ENCODE measurements at regions of chr2 and their contacts with region 1.

Region 1: GRCh38 chr2:85635636-85636035 is 19.6 kb downstream of the USP39 start:
- DNase-seq: no peak
- H3K4me3 ChIP-seq: no peak overlapping the region
- H3K4me3 Mint-ChIP-seq: no peak overlapping the region
- H3K27ac ChIP-seq: peak overlapping the region in 1 of 2 donors; percentile 65
- H3K27ac Mint-ChIP-seq: peak overlapping the region in 3 of 7 donors; percentile 1 to 38 (median 20)
- H3K4me1 ChIP-seq: no peaks in the 10 kb centered on the region
- H3K4me1 Mint-ChIP-seq: peaks cover 7% of the 10 kb centered on the region
- H3K27me3 ChIP-seq: no peaks in the 10 kb centered on the region
- H3K27me3 Mint-ChIP-seq: no peaks in the 10 kb centered on the region
- CTCF ChIP-seq: no peak

Region 2: GRCh38 chr2:85707304-85707703 is 71.7 kb after region 1 on chr2:
- intact Hi-C with region 1: no loop called
- DNase-seq: peak; percentile 88 to 96 (median 88)
- H3K4me3 ChIP-seq: peak overlapping the region in 1 of 3 experiments; percentile 35
- H3K4me3 Mint-ChIP-seq: peak overlapping the region in 1 of 2 donors; percentile 52
- H3K27ac ChIP-seq: peak overlapping the region; percentile 97 to 99
- H3K27ac Mint-ChIP-seq: peak overlapping the region; percentile 97 to 100 (median 99)
- H3K4me1 ChIP-seq: peaks cover 100% of the 10 kb centered on the region in 2 donors
- H3K4me1 Mint-ChIP-seq: peaks cover 90% of the 10 kb centered on the region
- H3K27me3 ChIP-seq: no peaks in the 10 kb centered on the region
- H3K27me3 Mint-ChIP-seq: no peaks in the 10 kb centered on the region
- CTCF ChIP-seq: peak; percentile 80

Region 3: DNA sequence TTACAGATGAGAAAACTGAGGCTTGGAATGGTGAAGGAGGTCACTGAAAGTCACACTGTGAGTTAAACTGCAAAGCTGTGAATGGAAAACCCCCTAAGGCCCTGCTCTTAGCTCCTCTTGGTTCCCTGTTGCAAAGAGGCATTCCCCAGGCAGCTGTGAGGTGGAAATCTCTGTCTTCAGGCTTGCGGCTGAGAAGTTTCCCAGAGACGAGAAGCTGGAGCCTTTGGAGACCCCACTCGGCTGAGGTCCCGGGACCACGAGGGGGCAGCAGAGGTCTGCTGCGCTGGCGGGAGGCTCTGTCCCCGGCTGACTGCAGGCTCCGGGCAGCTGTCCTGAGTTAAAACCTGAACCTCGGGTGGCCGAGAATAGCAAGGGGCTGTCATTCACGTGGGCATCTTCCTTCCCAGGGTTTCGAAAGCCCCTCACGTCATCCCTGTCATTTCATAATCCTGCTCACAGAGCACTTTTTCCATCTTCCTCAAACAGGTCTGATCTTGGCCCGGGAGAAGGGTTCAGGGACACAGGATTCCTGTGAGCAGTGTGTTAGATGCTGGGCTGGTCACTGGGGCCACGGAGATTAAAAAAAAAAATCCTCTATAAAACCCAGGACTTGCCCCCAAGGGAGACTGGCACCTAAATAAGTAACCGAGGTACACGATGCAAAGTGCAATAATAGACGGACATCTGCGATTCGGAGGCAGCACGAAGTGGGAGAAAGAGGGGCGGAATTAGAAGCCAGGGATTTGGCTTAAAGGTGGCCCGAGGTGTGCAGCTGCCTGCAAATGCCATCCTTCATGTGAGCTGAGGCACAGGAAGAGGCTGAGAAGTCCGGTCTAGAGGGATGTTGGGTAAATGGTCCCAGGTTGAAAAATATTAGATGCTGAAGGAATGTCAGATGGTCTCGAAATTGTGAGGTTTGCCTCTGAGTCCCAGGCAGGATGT is 93.5 kb after region 1 on chr2:
- intact Hi-C with region 1: loop called in 1 of 2 experiments (anchors 10 kb)
- DNase-seq: peak; percentile 68 to 80 (median 76)
- H3K4me3 ChIP-seq: peak overlapping the region in 2 of 3 experiments; percentile 1 to 60
- H3K4me3 Mint-ChIP-seq: peak overlapping the region; percentile 48 to 73
- H3K27ac ChIP-seq: peak overlapping the region; percentile 6 to 54
- H3K27ac Mint-ChIP-seq: peak overlapping the region; percentile 11 to 82 (median 45)
- H3K4me1 ChIP-seq: peaks cover 32 to 39% of the 10 kb centered on the region in 2 donors
- H3K4me1 Mint-ChIP-seq: peaks cover 36% of the 10 kb centered on the region
- H3K27me3 ChIP-seq: no peaks in the 10 kb centered on the region
- H3K27me3 Mint-ChIP-seq: peaks cover 0 to 2% (median 0%) of the 10 kb centered on the region in 3 donors
- CTCF ChIP-seq: peak; percentile 89